Activated CD8-positive, alpha-beta T cell treated with anti-CD3 and anti-CD28 coated beads for 36 hours (primary cell): ENCODE measurements at regions of chr17 and their contacts with region 1.

Region 1: GRCh38 chr17:55527540-55528118 is 16.4 kb upstream of the SMIM36 start:
- DNase-seq: peak; percentile 13
- ATAC-seq: no peak
- H3K4me3 Mint-ChIP-seq: no peak overlapping the region
- H3K27ac Mint-ChIP-seq: no peak overlapping the region
- H3K4me1 Mint-ChIP-seq: peaks cover 3% of the 10 kb centered on the region
- H3K27me3 Mint-ChIP-seq: peaks cover 5% of the 10 kb centered on the region
- CTCF ChIP-seq: no peak

Region 2: DNA sequence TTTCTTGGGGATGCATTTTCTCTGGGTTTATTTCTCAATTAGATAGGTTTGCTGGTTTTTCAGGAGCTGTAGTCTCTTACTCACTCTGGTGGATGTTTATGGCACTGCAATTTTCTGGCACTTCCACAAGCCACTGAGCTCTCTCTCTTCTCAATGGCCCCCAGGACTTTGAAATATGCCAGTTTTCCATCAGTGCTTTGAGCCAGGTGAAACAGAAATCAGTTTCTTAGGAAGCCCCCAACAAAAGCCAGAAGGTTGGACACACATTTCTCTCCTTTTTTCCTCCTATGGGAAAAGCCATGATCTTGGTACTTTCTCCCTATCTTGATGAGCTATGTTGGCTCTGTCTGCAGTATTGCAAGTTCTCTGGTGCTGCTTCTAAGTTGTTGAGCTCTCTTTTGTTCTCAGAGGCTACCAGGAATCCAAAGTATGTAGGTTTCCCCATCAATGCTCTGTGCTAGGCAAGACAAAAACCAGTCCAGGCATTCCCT is 74.3 kb after region 1 on chr17:
- CTCF ChIA-PET with region 1: interaction called, 85 read pairs
- POLR2A ChIA-PET with region 1: no interaction called
- intact Hi-C with region 1: loop called (anchors 5 kb)
- DNase-seq: peak; percentile 14
- ATAC-seq: peak; percentile 58
- H3K4me3 Mint-ChIP-seq: no peak overlapping the region
- H3K27ac Mint-ChIP-seq: no peak overlapping the region
- H3K4me1 Mint-ChIP-seq: no peaks in the 10 kb centered on the region
- H3K27me3 Mint-ChIP-seq: peaks cover 7% of the 10 kb centered on the region
- CTCF ChIP-seq: peak; percentile 62

Region 3: DNA sequence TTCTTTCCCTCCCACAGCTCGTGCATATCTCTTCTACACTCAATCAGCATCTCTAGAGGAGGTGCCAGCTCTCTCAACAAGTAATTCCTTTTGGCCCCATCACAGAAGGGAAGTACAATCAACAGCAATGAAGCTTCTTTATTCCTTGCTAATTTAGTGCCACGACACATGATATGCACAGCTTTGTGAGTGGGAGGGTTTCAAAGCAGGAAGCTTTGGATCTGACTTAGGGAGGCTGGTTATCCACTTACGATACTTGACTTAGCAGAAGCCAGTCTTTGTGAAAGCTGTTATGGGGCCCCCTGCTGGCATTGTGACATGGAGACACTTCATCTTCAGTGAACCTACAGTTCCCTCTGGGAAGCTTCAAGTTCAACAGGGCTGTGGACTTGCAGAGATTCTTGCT is 114.0 kb after region 1 on chr17:
- CTCF ChIA-PET with region 1: interaction called, 14 read pairs
- POLR2A ChIA-PET with region 1: no interaction called
- intact Hi-C with region 1: no loop called
- DNase-seq: peak; percentile 53
- ATAC-seq: peak; percentile 24
- H3K4me3 Mint-ChIP-seq: no peak overlapping the region
- H3K27ac Mint-ChIP-seq: no peak overlapping the region
- H3K4me1 Mint-ChIP-seq: no peaks in the 10 kb centered on the region
- H3K27me3 Mint-ChIP-seq: peaks cover 8% of the 10 kb centered on the region
- CTCF ChIP-seq: peak; percentile 39

Region 4: GRCh38 chr17:55735731-55736405 is 208.2 kb after region 1 on chr17:
- CTCF ChIA-PET with region 1: interaction called, 23 read pairs
- POLR2A ChIA-PET with region 1: no interaction called
- intact Hi-C with region 1: no loop called
- DNase-seq: peak; percentile 51
- ATAC-seq: no peak
- H3K4me3 Mint-ChIP-seq: no peak overlapping the region
- H3K27ac Mint-ChIP-seq: no peak overlapping the region
- H3K4me1 Mint-ChIP-seq: peaks cover 31% of the 10 kb centered on the region
- H3K27me3 Mint-ChIP-seq: peaks cover 23% of the 10 kb centered on the region
- CTCF ChIP-seq: peak; percentile 81

Region 5: GRCh38 chr17:55770148-55770870 is 242.7 kb after region 1 on chr17:
- CTCF ChIA-PET with region 1: interaction called, 41 read pairs
- POLR2A ChIA-PET with region 1: no interaction called
- intact Hi-C with region 1: loop called (anchors 5 kb)
- DNase-seq: no peak
- ATAC-seq: no peak
- H3K4me3 Mint-ChIP-seq: no peak overlapping the region
- H3K27ac Mint-ChIP-seq: no peak overlapping the region
- H3K4me1 Mint-ChIP-seq: no peaks in the 10 kb centered on the region
- H3K27me3 Mint-ChIP-seq: no peaks in the 10 kb centered on the region
- CTCF ChIP-seq: peak; percentile 60